ENCODE measurements at regions of chr7 and their contacts with region 1.

Region 1: GRCh38 chr7:16801111-16801542 is 3.7 kb downstream of the AGR2 start:
- DNase-seq: peak; percentile 94
- ATAC-seq: peak; percentile 50
- H3K4me3 ChIP-seq: no peak overlapping the region
- H3K27ac ChIP-seq: peak overlapping the region; percentile 35
- H3K4me1 ChIP-seq: peaks cover 55% of the 10 kb centered on the region
- H3K27me3 ChIP-seq: no peaks in the 10 kb centered on the region
- CTCF ChIP-seq: peak; percentile 78

Region 2: DNA sequence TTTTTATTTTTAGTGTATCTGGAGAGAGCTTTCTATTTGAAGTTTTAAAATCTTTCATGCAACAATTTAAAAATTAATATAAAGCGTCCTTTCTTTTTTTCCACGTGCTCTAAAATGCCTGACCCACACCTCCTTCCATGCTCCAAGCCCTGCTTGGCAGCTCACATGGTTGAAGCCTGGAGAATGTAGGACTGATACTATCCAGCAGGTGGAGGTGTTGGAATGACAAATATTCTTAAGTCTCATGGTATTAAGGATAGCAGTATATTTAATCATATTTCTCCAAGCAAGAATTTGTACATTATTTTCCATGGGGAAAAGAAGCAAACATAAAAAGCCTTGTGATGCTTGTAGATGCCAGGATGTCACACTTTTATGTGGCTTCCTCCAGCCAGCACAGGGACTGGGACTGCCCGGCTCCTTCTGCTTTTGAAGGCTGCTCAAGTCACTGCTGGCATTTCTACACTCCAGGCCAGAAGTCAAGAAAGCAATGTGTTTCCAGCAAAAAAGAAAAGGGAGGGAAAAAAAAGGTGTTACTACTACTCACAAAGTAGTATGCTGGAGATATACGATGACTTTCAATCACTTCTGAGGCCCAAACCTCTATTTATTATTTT is 105.4 kb before region 1 on chr7:
- CTCF ChIA-PET with region 1: interaction called, 3 read pairs
- POLR2A ChIA-PET with region 1: no interaction called
- intact Hi-C with region 1: loop called (anchors 5 kb)
- DNase-seq: peak; percentile 80
- ATAC-seq: peak; percentile 69
- H3K4me3 ChIP-seq: no peak overlapping the region
- H3K27ac ChIP-seq: no peak overlapping the region
- H3K4me1 ChIP-seq: peaks cover 32% of the 10 kb centered on the region
- H3K27me3 ChIP-seq: no peaks in the 10 kb centered on the region
- CTCF ChIP-seq: peak; percentile 74

Region 3: GRCh38 chr7:16811551-16811950 is 10.4 kb after region 1 on chr7:
- CTCF ChIA-PET with region 1: interaction called, 5 read pairs
- POLR2A ChIA-PET with region 1: interaction called, 5 read pairs
- intact Hi-C with region 1: loop called (anchors 1 kb)
- DNase-seq: peak; percentile 82
- ATAC-seq: peak; percentile 42
- H3K4me3 ChIP-seq: peak overlapping the region; percentile 34
- H3K27ac ChIP-seq: peak overlapping the region; percentile 96
- H3K4me1 ChIP-seq: peaks cover 56% of the 10 kb centered on the region
- H3K27me3 ChIP-seq: no peaks in the 10 kb centered on the region
- CTCF ChIP-seq: no peak

Region 4: DNA sequence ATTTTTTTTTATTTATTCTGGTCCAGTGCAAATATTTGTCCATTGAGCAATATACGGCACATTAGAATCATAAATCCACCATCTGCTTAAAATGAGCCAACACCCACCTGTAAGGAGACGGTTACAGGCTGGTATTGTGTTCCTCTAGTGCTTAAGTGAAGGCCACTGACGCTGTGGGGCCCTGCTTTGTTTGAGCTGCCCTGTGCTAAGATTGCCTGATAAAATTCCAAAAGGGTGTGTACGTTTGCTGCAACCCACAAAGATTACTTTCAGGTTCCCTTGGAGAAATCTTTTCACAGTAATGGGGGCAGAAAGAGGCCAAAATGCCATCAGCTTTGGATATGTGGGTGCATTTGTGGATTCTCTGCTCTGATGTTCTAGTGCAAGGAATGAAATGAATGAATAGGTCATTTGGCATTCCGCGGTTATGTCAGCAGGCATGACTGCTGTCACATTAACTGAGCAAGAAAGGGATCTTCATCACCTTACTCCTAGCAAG is 46.3 kb after region 1 on chr7:
- CTCF ChIA-PET with region 1: interaction called, 3 read pairs
- POLR2A ChIA-PET with region 1: no interaction called
- intact Hi-C with region 1: loop called (anchors 1 kb)
- DNase-seq: peak; percentile 95
- ATAC-seq: peak; percentile 99
- H3K4me3 ChIP-seq: peak overlapping the region; percentile 61
- H3K27ac ChIP-seq: peak overlapping the region; percentile 97
- H3K4me1 ChIP-seq: peaks cover 38% of the 10 kb centered on the region
- H3K27me3 ChIP-seq: no peaks in the 10 kb centered on the region
- CTCF ChIP-seq: no peak

Region 5: DNA sequence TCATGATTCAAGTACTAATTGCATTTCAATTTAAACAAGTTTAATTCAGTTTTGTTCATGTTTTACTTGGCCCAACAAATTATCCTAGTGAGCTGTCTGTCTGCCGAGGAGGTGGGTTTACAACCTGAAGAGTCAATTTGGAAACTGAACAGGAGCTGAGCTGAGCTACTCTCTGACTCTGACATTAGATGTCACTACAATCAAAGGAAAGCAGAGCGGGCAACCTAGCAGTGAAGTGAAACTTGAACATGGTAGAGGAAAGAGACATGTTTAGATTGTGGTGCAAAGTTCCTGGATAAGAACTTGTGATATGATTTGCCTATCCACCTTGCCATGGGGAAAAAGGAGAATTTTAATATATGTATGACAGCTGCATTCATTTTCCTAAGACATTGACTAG is 90.2 kb after region 1 on chr7:
- CTCF ChIA-PET with region 1: interaction called, 13 read pairs
- POLR2A ChIA-PET with region 1: interaction called, 9 read pairs
- intact Hi-C with region 1: loop called (anchors 1 kb)
- DNase-seq: peak; percentile 85
- ATAC-seq: peak; percentile 87
- H3K4me3 ChIP-seq: no peak overlapping the region
- H3K27ac ChIP-seq: peak overlapping the region; percentile 45
- H3K4me1 ChIP-seq: peaks cover 37% of the 10 kb centered on the region
- H3K27me3 ChIP-seq: no peaks in the 10 kb centered on the region
- CTCF ChIP-seq: peak; percentile 88

Region 6: GRCh38 chr7:17041324-17041723 is 240.2 kb after region 1 on chr7:
- CTCF ChIA-PET with region 1: no interaction called
- POLR2A ChIA-PET with region 1: interaction called, 10 read pairs
- intact Hi-C with region 1: loop called (anchors 5 kb)
- DNase-seq: peak; percentile 87
- ATAC-seq: peak; percentile 71
- H3K4me3 ChIP-seq: peak overlapping the region; percentile 9; the same call in 1 of the 2 replicates
- H3K27ac ChIP-seq: peak overlapping the region; percentile 80
- H3K4me1 ChIP-seq: peaks cover 53% of the 10 kb centered on the region
- H3K27me3 ChIP-seq: no peaks in the 10 kb centered on the region
- CTCF ChIP-seq: no peak

Measured in PC-3 (cell line).